ENCODE measurements at regions of chr6 and their contacts with region 1.

Region 1: DNA sequence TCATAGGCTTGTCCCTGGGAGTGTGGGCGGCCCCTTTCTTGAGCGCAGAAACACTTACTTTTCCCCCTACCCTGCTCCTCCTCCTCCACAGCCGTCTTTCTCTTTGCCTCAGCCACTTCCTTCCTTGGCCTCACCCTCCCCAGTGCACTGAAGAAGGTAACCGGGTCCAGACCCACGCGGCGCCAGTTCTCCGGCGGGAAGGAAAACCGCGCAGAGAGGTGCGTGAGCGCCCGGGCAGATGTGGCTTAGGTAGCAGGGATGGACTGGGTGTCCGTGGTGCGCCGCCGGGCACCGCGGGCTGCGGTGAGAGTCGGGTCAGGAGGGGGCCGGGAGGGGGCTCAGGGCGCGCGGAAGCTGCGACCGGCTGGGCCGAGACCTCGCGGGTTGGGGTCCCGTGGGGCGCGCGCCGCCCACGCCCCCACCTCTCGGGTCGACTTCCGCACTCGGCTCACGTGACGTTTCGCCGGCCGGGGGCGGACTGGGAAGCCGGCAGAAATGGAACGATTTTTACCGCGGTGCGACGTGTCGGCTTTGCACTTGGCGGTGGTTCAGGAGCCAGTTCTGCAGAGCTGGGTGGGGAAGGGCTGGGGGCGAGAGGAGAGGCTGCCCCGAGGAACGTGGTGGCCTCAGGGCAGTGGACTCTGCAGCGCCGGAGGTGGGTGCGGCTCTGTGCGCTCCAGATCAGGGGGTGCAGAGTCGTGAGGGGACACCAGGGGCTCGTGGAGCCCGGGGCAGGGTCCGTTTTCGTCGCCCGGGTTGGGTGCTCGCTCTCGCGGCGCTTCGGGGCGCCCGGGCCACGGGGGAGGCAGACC is at the start of gene ABRACL:
- DNase-seq: peak; percentile 77
- H3K4me3 Mint-ChIP-seq: peak within 1 kb of the TSS; percentile 93
- H3K27ac Mint-ChIP-seq: peak within 1 kb of the TSS; percentile 89
- H3K4me1 Mint-ChIP-seq: peaks cover 17% of the 10 kb centered on the region
- H3K27me3 Mint-ChIP-seq: no peaks in the 10 kb centered on the region
- total RNA-seq, gene ABRACL: 151 and 161 TPM in 2 replicates

Region 2: DNA sequence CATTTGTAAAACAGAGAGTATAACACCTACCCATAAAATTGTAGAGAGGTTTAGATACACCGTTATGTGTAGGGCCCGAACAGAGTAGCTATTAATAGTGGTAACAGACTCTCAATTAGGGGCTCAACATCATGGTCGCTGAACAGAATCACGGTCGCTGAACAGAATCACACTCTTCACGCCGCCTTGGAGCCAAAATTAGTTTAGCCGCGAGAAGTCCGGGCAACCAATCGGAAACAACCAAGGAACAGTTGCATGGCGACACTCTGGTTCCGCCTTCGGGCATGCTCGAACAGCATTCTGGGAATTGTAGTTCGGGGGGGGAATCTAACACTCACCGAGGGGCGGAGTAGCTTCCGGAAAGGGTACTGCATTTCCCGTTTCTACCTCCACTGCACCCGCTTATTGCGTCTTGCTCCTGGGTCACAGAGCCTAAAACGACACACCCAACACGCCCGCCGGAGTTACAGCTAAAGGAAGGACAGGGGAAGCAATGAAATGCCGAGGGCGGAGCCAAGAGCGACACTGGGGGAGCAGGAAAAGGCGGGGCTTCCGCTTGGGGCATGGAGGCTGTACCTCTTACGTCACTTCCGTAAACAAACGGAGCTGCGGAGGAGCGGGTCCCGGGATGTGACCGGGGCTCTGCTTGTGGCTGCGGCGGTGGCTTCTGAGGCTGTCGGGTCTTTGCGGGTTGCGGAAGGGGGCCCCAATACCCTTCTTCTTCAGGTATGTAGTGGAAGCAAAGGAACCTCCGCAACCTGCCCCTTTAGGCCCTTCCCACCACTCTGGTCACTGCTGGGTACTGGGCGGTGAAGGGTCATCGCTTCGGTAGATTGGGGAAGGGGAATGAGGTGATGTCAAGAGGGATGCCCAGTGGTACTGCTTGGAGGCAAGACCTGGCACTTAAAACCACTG is 255.4 kb before region 1 on chr6 and contains the start of gene CCDC28A:
- intact Hi-C with region 1: loop called (anchors 1 kb)
- DNase-seq: peak; percentile 92
- H3K4me3 Mint-ChIP-seq: peak within 1 kb of the TSS; percentile 97
- H3K27ac Mint-ChIP-seq: peak within 1 kb of the TSS; percentile 99
- H3K4me1 Mint-ChIP-seq: peaks cover 23% of the 10 kb centered on the region
- H3K27me3 Mint-ChIP-seq: no peaks in the 10 kb centered on the region
- total RNA-seq, gene CCDC28A: 18.2 and 19.2 TPM in 2 replicates

Region 3: GRCh38 chr6:138795809-138796603 is 232.9 kb before region 1 on chr6 and contains the start of gene ECT2L:
- intact Hi-C with region 1: no loop called
- DNase-seq: no peak
- H3K4me3 Mint-ChIP-seq: no peak within 1 kb of the TSS
- H3K27ac Mint-ChIP-seq: no peak within 1 kb of the TSS
- H3K4me1 Mint-ChIP-seq: peaks cover 11% of the 10 kb centered on the region
- H3K27me3 Mint-ChIP-seq: peaks cover 12% of the 10 kb centered on the region
- total RNA-seq, gene ECT2L: not detected in 2 replicates

Region 4: GRCh38 chr6:138847884-138848283 is 181.0 kb before region 1 on chr6:
- intact Hi-C with region 1: no loop called
- DNase-seq: no peak
- H3K4me3 Mint-ChIP-seq: no peak overlapping the region
- H3K27ac Mint-ChIP-seq: no peak overlapping the region
- H3K4me1 Mint-ChIP-seq: no peaks in the 10 kb centered on the region
- H3K27me3 Mint-ChIP-seq: no peaks in the 10 kb centered on the region

Region 5: DNA sequence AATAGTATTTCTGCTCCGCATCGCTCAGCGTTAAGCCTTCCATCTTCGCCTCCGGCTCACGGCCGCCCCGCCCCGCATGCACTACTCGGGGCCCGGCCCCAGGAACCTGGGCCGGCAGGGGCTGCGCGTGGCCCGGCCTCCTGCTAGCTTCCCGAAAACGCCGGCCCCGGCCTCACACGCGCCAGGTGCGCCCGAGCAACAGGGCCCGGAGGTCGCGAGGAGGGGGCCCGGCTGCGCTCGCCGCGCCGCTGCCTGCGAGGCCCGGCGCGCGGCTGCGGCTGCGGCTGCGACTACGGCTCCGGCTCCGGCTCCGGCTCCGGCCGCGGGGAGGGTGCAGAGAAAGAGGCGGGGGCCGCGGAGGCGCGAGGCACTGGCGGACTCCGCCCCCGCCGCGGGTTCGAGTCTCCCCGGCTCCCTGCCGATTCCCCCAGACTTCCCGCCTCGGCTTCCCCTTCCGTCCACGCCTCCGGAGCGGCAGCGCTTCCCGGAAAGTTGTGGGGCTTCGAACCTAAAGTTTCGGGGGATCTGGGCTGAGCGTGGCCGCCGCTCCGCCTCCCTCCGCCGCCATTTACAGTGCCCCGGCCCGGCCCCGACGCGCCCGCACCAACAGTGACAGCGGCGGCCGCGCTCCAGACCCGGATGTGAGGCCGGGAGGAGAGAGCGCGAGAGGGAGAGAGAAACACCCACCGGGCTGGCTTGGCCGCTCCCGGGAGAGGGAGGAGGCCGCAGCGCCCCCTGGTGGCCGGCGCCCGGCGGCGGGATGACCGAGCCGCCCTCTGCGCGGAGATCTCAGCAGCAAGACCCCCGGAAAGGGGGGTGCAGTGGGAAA is 41.0 kb before region 1 on chr6 and contains the start of gene REPS1:
- intact Hi-C with region 1: loop called (anchors 1 kb)
- DNase-seq: peak; percentile 86
- H3K4me3 Mint-ChIP-seq: peak within 1 kb of the TSS; percentile 92
- H3K27ac Mint-ChIP-seq: peak within 1 kb of the TSS; percentile 95
- H3K4me1 Mint-ChIP-seq: peaks cover 6% of the 10 kb centered on the region
- H3K27me3 Mint-ChIP-seq: peaks cover 2% of the 10 kb centered on the region
- total RNA-seq, gene REPS1: 96.3 and 99.8 TPM in 2 replicates

Region 6: DNA sequence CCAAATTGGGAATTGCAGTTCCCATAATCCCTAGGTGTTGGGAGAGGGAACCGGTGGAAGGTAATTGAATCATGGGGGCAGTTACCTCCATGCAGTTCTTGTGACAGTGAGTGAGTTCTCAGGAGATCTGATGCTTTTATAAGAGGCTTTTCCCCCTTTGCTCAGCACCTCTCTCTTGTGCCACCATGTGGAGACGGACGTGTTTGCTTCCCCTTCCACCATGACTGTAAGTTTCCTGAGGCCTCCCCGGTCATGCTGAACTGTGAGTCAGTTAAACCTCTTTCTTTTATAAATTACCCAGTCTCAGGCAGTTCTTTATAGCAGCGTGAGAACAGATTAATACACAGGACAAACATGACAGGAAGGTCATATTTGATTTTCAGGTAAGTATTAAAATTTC is 80.7 kb after region 1 on chr6:
- intact Hi-C with region 1: loop called (anchors 2 kb)
- DNase-seq: no peak
- H3K4me3 Mint-ChIP-seq: no peak overlapping the region
- H3K27ac Mint-ChIP-seq: no peak overlapping the region
- H3K4me1 Mint-ChIP-seq: peaks cover 28% of the 10 kb centered on the region
- H3K27me3 Mint-ChIP-seq: no peaks in the 10 kb centered on the region

Region 7: DNA sequence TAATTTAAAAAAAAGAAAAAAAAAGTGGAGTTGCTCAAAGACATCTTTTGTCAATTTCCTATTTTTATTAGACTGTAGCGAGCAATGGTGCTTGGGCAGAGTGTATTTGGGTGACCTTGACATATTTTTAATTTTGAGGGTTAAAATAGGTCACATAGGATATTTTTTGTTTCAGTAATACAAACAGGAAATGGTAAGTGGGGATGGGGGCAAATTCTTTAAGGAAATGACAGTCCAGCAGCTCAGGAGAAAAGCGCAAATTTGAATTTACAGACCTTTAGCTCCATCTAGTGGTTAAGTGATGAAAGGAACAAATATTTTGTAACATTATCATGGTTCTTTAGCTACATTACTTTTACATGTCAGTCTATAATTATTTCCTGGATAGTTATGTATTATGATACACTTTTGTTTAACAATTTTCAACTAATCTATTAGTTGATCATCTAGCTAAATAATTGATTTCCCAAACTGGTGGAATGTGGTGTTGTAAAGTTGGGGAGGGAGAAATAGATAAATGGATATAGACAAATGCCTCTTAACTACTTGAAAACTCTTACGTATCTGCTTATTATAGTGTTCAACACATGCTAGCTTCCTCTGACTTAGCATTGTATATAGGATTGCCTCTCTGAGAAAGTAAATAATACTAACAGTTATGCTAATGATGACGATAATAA is 335.6 kb after region 1 on chr6:
- intact Hi-C with region 1: loop called (anchors 1 kb)
- DNase-seq: no peak
- H3K4me3 Mint-ChIP-seq: no peak overlapping the region
- H3K27ac Mint-ChIP-seq: no peak overlapping the region
- H3K4me1 Mint-ChIP-seq: peaks cover 24% of the 10 kb centered on the region
- H3K27me3 Mint-ChIP-seq: peaks cover 1% of the 10 kb centered on the region